Right ventricle myocardium inferior (tissue), 1 donor: ENCODE measurements at regions of chr1 and their contacts with region 1.

Region 1: DNA sequence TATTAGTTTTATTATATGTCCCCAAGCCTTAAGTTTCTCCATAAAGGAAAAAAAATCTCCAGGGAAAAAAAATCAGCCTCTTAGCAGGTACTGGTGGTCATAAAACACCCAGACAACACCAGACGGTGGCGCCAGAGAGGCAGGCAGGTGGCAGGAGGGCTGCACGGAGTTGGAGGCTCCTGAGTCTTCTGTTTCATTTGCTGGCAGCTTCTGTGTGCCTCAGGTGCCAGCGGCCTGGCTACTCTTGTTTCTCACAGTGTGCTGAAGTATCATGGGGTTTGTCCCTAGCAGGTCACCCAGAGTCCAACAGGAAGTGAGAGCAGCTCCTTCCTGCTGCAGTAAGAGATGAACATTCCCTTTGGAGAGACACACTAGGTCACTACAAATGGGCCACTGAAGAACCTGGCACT is 123.3 kb upstream of the GADD45A start:
- DNase-seq: peak; percentile 94
- ATAC-seq: peak; percentile 93

Region 2: DNA sequence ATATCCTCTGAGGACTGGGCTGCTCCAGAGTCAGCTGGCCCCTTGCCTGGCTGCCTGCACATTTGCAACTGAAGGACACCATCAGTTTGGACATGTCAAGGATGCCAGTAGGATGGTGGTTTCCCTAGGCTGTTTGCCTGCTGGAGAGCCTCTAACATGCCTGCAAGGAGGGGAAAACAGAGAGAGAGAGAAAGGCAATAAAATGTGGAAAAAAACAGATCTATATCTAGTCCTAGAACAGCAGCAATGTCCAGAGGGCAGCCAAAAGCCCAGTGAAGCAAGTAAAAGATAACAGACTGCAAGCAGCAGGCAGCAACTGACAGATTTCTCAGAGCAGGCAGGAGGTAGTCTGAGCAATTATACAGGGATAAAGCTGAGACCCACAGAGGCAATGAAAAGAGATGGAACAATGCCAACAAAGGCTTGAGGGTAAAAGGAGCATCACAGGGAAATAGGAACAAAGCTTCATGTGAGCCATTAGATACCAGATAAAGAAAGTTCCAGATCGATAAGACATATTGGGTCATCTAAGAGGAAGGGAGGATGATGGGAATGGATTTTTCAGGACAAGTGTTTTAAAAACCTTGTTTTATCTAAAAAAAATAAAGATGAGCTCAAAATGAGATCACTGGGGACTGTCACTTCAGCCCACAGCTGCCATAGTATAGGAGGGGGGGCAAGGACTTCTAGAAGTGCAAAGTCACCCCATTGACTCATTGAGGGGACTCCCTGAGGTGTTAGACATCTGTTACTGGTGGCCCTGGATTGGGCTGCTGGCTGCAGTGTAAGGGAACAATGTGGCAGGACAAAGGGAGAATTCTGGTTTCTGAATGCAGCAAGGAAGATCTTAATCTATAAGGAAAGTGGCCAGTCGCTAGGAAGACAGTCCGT is 84.7 kb after region 1 on chr1:
- intact Hi-C with region 1: loop called (anchors 5 kb)
- DNase-seq: peak; percentile 73
- ATAC-seq: peak; percentile 52

Region 3: DNA sequence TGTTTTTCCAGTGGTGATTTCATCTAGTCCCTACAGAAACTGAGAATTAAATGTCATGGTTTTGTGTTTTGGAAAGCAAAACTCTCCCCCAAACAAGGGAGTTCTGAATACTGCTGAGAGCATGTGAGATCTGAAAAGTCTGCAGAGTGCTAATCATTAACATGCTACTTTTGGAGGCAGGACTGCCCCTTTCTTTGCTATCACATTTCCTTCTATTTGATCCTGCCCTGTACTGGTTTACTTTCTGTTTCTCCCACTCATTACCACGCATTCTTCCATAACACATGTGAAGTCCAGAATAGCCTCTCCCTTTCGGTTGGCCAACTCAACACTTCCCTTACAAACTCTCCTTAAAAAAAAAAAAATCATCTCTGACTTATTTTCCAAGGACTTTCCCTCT is 186.9 kb after region 1 on chr1:
- intact Hi-C with region 1: loop called (anchors 5 kb)
- DNase-seq: no peak
- ATAC-seq: peak; percentile 55

Region 4: DNA sequence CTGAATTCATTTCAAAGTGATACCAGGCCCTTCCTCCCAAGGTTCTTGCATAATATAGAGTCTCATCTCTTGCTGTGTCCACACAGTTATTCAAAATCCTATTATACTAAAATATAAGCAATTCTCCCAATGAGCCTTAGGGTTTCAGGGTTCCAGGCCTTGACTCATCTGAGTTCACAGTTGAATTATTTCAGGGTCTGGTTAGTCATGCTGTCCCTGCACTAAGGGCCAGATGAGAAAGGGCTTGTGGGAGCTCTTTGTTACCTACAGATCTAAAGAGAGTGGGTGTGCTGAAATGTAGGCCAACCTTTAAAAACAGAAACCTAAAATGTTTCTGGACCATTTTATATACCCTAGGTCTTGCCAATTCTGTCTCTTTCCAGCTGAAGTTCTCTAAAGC is 1668.5 kb after region 1 on chr1:
- intact Hi-C with region 1: no loop called
- DNase-seq: no peak
- ATAC-seq: no peak